ENCODE measurements at regions of chr9 and their contacts with region 1.

Region 1: DNA sequence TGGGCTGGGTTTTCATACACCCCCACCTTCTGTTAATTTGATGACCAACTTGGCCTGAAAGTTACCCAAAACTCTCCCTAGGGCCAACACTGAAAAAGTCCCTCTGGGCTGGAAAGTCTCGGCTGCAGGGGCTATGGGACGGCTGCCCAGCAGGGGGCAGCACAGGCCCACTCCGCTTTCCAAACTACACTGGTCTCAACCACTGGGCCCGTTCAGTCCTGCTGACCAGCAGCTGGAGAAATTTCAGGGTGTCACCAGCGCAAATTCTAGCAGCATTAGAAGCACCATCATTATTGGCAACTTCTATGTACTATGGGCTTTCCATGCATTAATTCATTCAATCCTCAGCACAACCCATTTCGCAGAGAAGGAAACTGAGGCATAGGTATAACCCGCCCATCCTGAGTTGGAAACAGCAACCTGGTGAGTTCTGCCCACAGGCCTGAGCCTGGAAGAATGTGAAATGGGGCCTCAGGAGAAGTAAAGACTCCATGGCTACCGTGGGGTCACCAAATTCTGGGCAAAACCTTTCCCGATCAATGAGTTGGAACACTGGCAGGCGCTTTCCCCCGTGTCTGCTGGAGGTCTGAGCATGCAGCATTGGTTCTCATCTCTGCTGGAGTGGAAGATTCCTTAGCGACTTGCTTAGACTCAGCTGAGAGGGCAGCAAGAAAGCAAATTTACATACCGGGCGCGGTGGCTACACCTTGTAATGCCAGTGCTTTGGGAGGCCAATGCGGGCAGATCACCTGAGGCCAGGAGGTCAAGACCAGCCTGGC is 9.7 kb downstream of the ORM2 start:
- DNase-seq: peak; percentile 47
- ATAC-seq: peak; percentile 95
- H3K4me3 ChIP-seq: no peak overlapping the region
- H3K27ac ChIP-seq: no peak overlapping the region
- H3K4me1 ChIP-seq: no peaks in the 10 kb centered on the region
- H3K27me3 ChIP-seq: no peaks in the 10 kb centered on the region
- CTCF ChIP-seq: peak; percentile 88
- POLR2A ChIP-seq: no peak; the same call in 1 of the 2 replicates
- RAD21 ChIP-seq: peak; percentile 88

Region 2: GRCh38 chr9:114378883-114379282 is 39.6 kb after region 1 on chr9:
- CTCF ChIA-PET with region 1: no interaction called
- POLR2A ChIA-PET with region 1: no interaction called
- dilution Hi-C with region 1: no loop called
- in situ Hi-C with region 1: no loop called
- intact Hi-C with region 1: no loop called
- DNase-seq: no peak
- ATAC-seq: no peak
- H3K4me3 ChIP-seq: no peak overlapping the region
- H3K27ac ChIP-seq: no peak overlapping the region
- H3K4me1 ChIP-seq: peaks cover 13% of the 10 kb centered on the region
- H3K27me3 ChIP-seq: no peaks in the 10 kb centered on the region
- CTCF ChIP-seq: no peak
- POLR2A ChIP-seq: no peak
- RAD21 ChIP-seq: no peak

Region 3: DNA sequence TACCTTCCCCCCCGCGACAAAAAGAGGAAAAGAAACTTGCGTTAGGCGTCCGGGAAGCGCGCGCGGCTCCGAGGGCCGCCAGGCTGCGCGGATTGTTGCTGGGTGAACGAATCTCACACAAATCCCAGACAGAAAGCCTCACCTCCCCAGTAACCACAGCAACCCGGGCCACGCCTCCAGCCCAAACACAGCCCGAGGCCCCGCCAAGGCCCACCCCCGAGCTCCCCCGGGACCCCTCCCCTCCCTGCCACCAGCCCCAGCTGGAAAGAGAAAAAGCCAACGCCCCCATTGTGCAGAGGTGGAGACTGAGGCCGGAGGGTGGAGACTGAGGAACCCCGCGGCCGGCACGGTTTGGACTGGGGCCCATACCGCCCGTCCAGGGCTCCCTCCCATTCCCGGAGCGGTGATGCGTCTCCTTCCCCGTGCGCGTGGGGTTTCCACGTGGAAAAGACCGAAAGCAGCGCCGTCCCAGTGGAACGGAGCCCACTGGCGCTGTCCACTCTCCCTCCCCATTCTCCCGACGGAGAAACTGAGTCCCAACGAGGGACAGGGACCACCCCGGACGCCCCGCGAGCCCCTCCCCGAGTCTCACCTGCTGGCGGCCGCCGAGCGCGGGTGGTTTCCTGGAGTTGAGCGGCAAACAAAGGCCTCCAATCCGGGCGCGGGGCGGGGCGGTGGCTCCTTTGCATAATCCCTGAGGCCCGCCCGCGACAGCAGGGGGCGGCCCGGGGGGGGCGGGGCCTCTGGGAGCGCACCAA is 58.7 kb after region 1 on chr9:
- CTCF ChIA-PET with region 1: no interaction called
- POLR2A ChIA-PET with region 1: no interaction called
- dilution Hi-C with region 1: no loop called
- in situ Hi-C with region 1: no loop called
- intact Hi-C with region 1: loop called (anchors 2 kb)
- DNase-seq: peak; percentile 86
- ATAC-seq: peak; percentile 97
- H3K4me3 ChIP-seq: peak overlapping the region; percentile 81
- H3K27ac ChIP-seq: peak overlapping the region; percentile 28
- H3K4me1 ChIP-seq: peaks cover 8% of the 10 kb centered on the region; the same call in 1 of the 2 replicates
- H3K27me3 ChIP-seq: no peaks in the 10 kb centered on the region
- CTCF ChIP-seq: no peak
- POLR2A ChIP-seq: peak; percentile 55
- RAD21 ChIP-seq: no peak

Region 4: DNA sequence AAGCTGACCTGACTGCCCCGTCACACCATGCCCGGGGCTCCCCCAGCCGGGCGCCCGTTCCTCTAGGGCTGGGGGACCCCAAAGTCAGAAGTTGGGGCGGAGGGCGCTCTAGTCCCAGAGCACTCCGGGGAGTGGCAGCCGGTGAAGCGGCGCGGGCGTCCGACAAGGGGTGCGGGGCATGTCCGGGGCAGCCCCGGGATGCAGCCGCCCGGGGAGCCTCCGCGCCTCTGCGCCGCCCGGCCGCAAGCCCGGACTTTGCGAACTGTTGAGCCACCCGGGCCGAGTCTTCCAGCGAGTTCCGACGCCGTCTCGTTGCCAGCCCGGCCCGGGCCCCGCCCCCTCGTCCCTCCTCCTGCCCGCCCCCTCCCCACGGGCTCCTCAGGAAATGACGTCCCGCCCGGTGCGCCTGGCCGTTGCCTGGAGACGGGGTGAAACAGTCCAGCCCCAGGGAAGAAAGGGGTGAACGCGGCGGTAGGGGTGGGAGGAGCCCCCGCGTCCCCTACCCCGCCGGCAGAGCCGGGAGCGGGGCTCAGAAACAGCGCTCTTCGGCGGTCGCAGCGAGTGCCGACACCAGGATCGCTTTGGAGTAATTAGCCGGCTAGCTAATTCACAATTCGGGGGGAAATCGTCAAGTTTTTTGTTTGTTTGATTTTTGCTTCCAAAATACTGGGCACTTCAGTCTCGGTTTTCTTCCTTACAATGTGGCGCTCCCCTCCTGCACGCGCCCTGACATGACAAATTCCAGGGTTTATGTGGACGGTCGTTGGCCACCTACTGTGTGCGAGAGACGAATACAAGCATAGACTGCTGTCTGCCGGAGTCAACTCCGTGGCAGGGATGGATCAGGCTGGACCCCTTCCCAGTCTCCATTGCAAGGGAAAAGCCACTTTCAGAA is 166.1 kb after region 1 on chr9 and contains the start of gene WHRN:
- CTCF ChIA-PET with region 1: no interaction called
- POLR2A ChIA-PET with region 1: no interaction called
- dilution Hi-C with region 1: no loop called
- in situ Hi-C with region 1: no loop called
- intact Hi-C with region 1: loop called (anchors 10 kb)
- DNase-seq: peak; percentile 76
- ATAC-seq: peak; percentile 83
- H3K4me3 ChIP-seq: peak within 1 kb of the TSS; percentile 71
- H3K27ac ChIP-seq: no peak within 1 kb of the TSS
- H3K4me1 ChIP-seq: peaks cover 11% of the 10 kb centered on the region
- H3K27me3 ChIP-seq: peaks cover 36% of the 10 kb centered on the region
- CTCF ChIP-seq: peak; percentile 11; the same call in 1 of the 2 replicates
- POLR2A ChIP-seq: peak; percentile 87
- RAD21 ChIP-seq: no peak
- total RNA-seq, gene WHRN: 0.18 and 0.28 TPM in 2 replicates

Region 5: GRCh38 chr9:114555696-114556095 is 216.4 kb after region 1 on chr9:
- CTCF ChIA-PET with region 1: no interaction called
- POLR2A ChIA-PET with region 1: no interaction called
- dilution Hi-C with region 1: no loop called
- in situ Hi-C with region 1: no loop called
- intact Hi-C with region 1: no loop called
- DNase-seq: no peak
- ATAC-seq: no peak
- H3K4me3 ChIP-seq: no peak overlapping the region
- H3K27ac ChIP-seq: no peak overlapping the region
- H3K4me1 ChIP-seq: peaks cover 4% of the 10 kb centered on the region
- H3K27me3 ChIP-seq: no peaks in the 10 kb centered on the region
- CTCF ChIP-seq: no peak
- POLR2A ChIP-seq: no peak
- RAD21 ChIP-seq: no peak

Measured in IMR-90 (cell line).